ENCODE measurements at regions of chr13 and their contacts with region 1.

Region 1: GRCh38 chr13:33999811-34000605 is 182.1 kb downstream of the RFC3 start:
- DNase-seq: no peak
- H3K4me3 ChIP-seq: no peak overlapping the region
- H3K27ac ChIP-seq: no peak overlapping the region
- H3K4me1 ChIP-seq: no peaks in the 10 kb centered on the region
- H3K27me3 ChIP-seq: no peaks in the 10 kb centered on the region
- CTCF ChIP-seq: no peak
- POLR2A ChIP-seq: no peak

Region 2: DNA sequence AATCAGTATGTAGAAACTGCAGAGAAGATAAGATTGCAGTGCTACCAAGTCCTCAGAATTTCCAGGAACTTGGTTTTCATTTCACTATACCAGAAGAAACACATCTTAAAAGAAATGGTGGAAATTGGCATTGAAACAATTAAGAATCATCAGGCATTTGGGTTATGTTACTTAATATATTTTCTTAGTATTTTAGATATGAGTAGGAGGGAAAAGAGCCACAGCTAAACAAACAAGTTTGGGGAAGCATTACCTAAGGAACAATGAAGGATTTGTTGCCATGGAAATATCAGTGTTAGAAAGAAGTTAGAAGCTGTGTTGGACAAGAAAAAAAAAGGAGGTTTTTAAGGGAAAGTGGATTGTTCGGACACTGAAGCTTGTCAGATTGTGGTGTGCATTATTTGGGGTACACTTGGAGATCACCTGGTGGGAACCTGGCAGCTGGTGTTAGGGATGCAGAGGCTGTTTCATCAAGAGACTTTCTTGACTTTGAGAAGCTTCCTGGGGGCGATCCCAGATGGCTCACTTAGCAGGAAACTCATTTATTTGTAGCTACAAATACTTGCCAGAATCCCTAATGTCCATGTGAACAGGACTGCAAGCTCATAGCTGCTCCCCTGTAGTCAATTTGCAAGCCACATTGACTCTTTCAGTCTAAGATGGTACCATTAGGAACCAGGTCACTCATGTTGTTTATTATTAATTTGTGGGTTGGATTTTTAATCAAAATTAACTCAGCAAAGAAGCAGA is 64.6 kb after region 1 on chr13:
- intact Hi-C with region 1: loop called (anchors 2 kb)
- DNase-seq: no peak
- H3K4me3 ChIP-seq: no peak overlapping the region
- H3K27ac ChIP-seq: no peak overlapping the region
- H3K4me1 ChIP-seq: no peaks in the 10 kb centered on the region
- H3K27me3 ChIP-seq: no peaks in the 10 kb centered on the region
- CTCF ChIP-seq: no peak
- POLR2A ChIP-seq: no peak